ENCODE measurements at regions of chr5 and their contacts with region 1.

Region 1: GRCh38 chr5:137778772-137779564 is 24.8 kb upstream of the HNRNPA0 start:
- DNase-seq: no peak
- ATAC-seq: no peak
- H3K4me3 Mint-ChIP-seq: no peak overlapping the region
- H3K27ac Mint-ChIP-seq: no peak overlapping the region
- H3K4me1 Mint-ChIP-seq: no peaks in the 10 kb centered on the region
- H3K27me3 Mint-ChIP-seq: no peaks in the 10 kb centered on the region

Region 2: DNA sequence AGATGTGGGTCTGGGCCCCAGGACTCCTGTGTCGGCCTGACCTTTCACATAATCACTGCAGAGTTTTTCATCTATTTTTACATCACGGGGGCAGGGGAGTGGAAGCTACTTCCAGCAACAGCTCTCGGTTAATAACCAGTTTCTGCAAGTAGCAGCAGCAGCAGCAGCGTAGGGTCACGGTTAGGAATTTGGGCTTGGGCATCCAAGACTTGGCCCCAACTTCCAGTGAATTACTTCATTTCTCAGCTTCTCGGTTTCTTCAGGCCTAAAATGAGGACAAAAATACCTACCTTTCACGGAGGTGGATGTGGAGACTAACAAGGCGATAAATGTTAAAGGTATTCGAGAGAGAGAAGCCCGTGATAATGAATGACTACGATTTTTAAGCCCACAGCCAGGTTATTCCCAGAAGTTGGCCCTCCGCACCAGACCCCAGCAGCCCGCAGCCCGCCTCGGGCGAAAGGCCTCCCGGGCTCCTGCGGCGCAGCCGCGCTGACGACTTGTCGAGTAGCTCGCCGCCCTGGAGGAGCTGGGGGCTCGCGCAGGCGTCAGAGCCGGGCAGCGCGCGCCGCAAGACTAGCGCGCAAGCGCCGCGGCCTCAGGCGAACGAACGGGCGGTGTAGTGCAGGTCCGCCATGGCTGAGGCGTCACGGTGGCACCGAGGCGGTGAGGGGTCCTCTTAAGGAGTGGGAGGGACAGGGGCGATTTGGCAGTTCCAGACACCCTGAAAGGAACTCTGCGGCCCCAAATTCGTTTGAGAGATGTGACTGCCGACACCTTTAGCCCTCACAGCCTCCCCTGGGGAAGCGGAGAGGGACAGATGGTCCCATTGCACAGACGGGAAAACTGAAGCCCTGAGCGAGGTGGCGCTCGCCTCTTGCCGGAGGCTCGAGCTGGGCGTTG is 110.1 kb after region 1 on chr5 and contains the start of gene PKD2L2:
- CTCF ChIA-PET with region 1: interaction called, 37 read pairs
- POLR2A ChIA-PET with region 1: no interaction called
- DNase-seq: peak; percentile 86
- ATAC-seq: peak; percentile 100
- H3K4me3 Mint-ChIP-seq: peak within 1 kb of the TSS; percentile 73
- H3K27ac Mint-ChIP-seq: peak within 1 kb of the TSS; percentile 85
- H3K4me1 Mint-ChIP-seq: peaks cover 21% of the 10 kb centered on the region
- H3K27me3 Mint-ChIP-seq: peaks cover 5% of the 10 kb centered on the region
- total RNA-seq, gene PKD2L2: not detected

Region 3: GRCh38 chr5:138128334-138128733 is 349.4 kb after region 1 on chr5:
- CTCF ChIA-PET with region 1: interaction called, 11 read pairs
- POLR2A ChIA-PET with region 1: no interaction called
- DNase-seq: no peak
- ATAC-seq: no peak
- H3K4me3 Mint-ChIP-seq: no peak overlapping the region
- H3K27ac Mint-ChIP-seq: no peak overlapping the region
- H3K4me1 Mint-ChIP-seq: no peaks in the 10 kb centered on the region
- H3K27me3 Mint-ChIP-seq: peaks cover 14% of the 10 kb centered on the region

Measured in activated CD8-positive, alpha-beta T cell treated with anti-CD3 and anti-CD28 coated beads, Interleukin-2, amount 10 ng/mL, durations not matched to agents 7 days and 5 days (primary cell).